Natural killer cell (primary cell): ENCODE measurements at regions of chr12 and their contacts with region 1.

Region 1: GRCh38 chr12:23055004-23055403 is 430.0 kb downstream of the ETNK1 start:
- DNase-seq: no peak
- ATAC-seq: no peak
- H3K4me3 ChIP-seq: no peak overlapping the region
- H3K4me3 Mint-ChIP-seq: no peak overlapping the region
- H3K27ac ChIP-seq: no peak overlapping the region
- H3K27ac Mint-ChIP-seq: no peak overlapping the region
- H3K4me1 ChIP-seq: no peaks in the 10 kb centered on the region
- H3K4me1 Mint-ChIP-seq: no peaks in the 10 kb centered on the region
- H3K27me3 ChIP-seq: no peaks in the 10 kb centered on the region
- H3K27me3 Mint-ChIP-seq: no peaks in the 10 kb centered on the region
- CTCF ChIP-seq: no peak

Region 2: DNA sequence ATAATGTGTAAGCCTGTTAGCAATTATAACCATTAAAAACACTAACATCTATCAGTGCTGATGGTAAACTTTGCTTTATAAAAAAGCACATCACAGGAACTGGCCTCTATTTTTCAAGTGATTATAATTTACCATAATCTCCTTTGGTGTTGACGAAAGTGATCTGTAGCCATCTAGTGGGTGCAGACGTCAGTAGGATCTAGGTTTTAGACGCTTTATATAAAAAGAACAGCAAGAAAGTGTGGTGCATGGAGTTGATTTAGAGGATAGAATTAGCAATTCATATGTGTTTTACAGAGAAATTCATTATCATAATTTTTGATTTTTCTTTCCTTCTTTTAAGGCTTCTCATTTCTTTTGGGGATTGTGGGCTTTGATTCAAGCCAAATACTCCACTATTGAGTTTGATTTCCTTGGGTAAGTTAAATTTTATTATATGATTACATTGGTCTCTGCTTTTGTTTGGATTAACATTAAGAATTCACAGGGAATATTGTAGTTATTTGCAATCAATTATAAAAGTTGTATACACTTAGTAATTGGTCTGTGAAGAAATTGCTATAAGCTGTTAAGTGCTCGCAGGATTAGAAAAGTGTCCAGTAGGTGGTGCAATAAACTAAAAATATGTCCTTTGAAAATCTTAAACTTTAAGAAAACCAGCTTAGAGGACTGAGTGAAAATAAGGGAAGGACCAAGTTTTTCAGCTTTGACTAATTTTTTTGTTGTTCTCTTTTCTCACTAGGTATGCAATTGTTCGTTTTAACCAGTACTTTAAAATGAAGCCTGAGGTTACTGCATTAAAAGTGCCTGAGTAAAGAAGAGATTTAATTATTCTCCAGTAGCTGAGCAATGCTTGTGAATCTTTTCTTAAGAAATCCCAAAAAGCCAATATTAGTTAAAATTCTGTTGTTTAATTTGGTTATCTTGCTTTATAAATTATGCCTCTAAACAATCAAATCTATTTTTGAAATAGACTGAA is 370.6 kb before region 1 on chr12:
- intact Hi-C with region 1: loop called (anchors 10 kb)
- DNase-seq: peak in 1 of 2 donors; percentile 49
- ATAC-seq: peak; percentile 44 to 52 (median 46)
- H3K4me3 ChIP-seq: no peak overlapping the region
- H3K4me3 Mint-ChIP-seq: no peak overlapping the region
- H3K27ac ChIP-seq: no peak overlapping the region
- H3K27ac Mint-ChIP-seq: peak overlapping the region in 1 of 2 donors; percentile 41
- H3K4me1 ChIP-seq: no peaks in the 10 kb centered on the region
- H3K4me1 Mint-ChIP-seq: peaks cover 15 to 22% of the 10 kb centered on the region in 2 donors
- H3K27me3 ChIP-seq: no peaks in the 10 kb centered on the region
- H3K27me3 Mint-ChIP-seq: no peaks in the 10 kb centered on the region
- CTCF ChIP-seq: peak; percentile 78